A673 (cell line): ENCODE measurements at regions of chr12 and their contacts with region 1.

Region 1: DNA sequence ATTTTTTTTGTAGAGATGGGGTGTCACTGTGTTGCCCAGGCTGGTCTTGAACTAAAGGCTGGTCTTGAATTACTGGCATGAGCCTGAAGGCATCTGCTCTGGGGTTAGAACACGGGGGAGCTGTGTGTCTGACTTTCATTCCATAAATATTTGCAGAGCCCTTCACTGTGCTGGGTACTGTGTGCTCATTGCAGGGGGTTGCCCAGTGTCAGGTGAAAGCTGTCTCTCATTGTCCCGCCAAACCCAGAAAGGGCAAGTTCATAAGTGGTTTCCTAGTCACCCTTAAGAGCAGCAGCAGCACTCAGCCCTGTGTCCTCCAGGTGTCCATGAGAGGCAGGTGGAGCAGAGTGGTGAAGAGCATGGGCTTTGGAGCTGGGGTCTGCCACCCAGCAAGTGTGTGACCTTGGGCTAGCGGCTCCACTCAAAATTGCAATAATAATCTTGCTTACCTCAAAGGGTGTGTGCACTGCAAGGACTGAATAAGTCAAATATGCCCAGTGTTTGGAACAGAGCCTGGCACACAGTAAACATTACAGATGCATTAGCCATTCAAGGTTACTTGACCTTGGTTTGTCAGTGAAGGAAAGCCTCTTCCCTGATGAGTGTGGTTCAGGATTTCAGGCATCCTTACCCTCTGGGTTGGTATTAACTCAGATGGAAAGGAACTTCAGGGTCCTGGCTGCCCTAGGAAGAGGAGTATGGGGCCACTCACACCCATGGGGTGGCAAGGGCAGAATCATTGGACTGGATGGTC is 4.4 kb upstream of the SMIM41 start:
- DNase-seq: no peak
- H3K4me3 ChIP-seq: no peak overlapping the region
- H3K27ac ChIP-seq: no peak overlapping the region
- H3K4me1 ChIP-seq: peaks cover 9% of the 10 kb centered on the region
- H3K27me3 ChIP-seq: no peaks in the 10 kb centered on the region
- CTCF ChIP-seq: no peak

Region 2: GRCh38 chr12:52063981-52064649 is 11.0 kb before region 1 on chr12:
- CTCF ChIA-PET with region 1: interaction called, 12 read pairs
- POLR2A ChIA-PET with region 1: no interaction called
- intact Hi-C with region 1: no loop called
- DNase-seq: no peak
- H3K4me3 ChIP-seq: no peak overlapping the region
- H3K27ac ChIP-seq: no peak overlapping the region
- H3K4me1 ChIP-seq: no peaks in the 10 kb centered on the region
- H3K27me3 ChIP-seq: no peaks in the 10 kb centered on the region
- CTCF ChIP-seq: no peak